Aorta (tissue), 5 donors: ENCODE measurements at regions of chr1 and their contacts with region 1.

Region 1: GRCh38 chr1:202501281-202501680 is 152.8 kb downstream of the PPP1R12B start:
- DNase-seq: no peak
- ATAC-seq: no peak
- H3K4me3 ChIP-seq: no peak overlapping the region
- H3K27ac ChIP-seq: no peak overlapping the region
- H3K4me1 ChIP-seq: peaks cover 1 to 3% of the 10 kb centered on the region in 2 donors
- H3K27me3 ChIP-seq: no peaks in the 10 kb centered on the region

Region 2: DNA sequence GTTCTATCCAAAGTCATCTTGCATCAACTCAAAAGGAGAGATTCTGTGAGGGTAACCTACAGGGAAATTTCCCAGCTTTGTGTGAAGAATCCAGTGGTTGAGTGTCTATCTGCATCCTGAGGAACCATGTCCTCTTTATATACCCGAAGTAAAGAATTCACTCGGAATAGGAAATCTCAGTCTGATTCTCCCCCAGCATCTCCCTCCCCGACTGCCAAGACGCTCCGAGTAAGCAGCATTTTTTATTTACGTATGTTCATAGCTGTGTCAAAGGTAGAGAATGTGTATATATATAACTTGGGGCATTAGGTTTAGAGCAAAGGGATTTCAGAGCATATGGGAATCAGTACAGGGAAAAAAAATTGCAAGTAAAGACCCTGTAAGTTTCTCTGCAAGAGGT is 38.7 kb after region 1 on chr1:
- intact Hi-C with region 1: loop called (anchors 5 kb)
- DNase-seq: no peak
- ATAC-seq: no peak
- H3K4me3 ChIP-seq: peak overlapping the region; percentile 94 to 100
- H3K27ac ChIP-seq: peak overlapping the region; percentile 96 to 97
- H3K4me1 ChIP-seq: no peaks in the 10 kb centered on the region
- H3K27me3 ChIP-seq: no peaks in the 10 kb centered on the region

Region 3: DNA sequence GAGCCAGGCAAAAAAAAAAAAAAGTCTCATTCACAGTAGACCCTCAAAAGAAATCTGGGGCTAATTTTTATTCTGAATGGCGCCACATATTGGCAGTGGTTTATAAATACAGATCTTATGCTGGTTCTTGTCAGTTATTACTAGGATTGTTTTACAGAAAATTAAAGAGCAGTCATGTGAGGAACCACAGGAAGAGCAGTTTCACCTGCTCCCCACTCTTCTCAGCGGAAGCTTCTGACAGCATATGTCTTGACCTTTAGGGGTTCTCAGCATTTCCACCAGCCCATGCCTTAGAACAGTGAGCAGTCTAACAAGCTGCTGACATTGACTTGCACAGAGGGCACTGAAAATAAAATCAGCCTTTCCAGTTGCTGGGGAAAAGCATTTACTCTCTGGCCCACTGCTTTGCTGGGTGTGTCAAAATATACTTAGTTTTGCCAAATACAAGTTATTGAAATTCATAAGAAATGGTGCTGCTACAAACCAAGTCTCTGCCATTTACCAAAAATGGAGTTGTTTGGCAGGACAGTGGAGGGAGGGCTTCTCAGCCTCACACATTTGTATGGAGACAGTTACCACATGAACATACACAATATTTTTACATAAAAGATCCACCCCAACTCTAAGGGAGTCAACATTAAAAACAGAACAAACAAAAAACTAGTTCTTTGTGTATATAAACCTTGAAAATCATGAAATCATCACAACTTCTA is 64.8 kb after region 1 on chr1:
- intact Hi-C with region 1: loop called in 1 of 2 experiments (anchors 5 kb)
- DNase-seq: no peak
- ATAC-seq: peak; percentile 34
- H3K4me3 ChIP-seq: no peak overlapping the region
- H3K27ac ChIP-seq: peak overlapping the region in 1 of 2 donors; percentile 88
- H3K4me1 ChIP-seq: peaks cover 13 to 31% of the 10 kb centered on the region in 2 donors
- H3K27me3 ChIP-seq: no peaks in the 10 kb centered on the region

Region 4: DNA sequence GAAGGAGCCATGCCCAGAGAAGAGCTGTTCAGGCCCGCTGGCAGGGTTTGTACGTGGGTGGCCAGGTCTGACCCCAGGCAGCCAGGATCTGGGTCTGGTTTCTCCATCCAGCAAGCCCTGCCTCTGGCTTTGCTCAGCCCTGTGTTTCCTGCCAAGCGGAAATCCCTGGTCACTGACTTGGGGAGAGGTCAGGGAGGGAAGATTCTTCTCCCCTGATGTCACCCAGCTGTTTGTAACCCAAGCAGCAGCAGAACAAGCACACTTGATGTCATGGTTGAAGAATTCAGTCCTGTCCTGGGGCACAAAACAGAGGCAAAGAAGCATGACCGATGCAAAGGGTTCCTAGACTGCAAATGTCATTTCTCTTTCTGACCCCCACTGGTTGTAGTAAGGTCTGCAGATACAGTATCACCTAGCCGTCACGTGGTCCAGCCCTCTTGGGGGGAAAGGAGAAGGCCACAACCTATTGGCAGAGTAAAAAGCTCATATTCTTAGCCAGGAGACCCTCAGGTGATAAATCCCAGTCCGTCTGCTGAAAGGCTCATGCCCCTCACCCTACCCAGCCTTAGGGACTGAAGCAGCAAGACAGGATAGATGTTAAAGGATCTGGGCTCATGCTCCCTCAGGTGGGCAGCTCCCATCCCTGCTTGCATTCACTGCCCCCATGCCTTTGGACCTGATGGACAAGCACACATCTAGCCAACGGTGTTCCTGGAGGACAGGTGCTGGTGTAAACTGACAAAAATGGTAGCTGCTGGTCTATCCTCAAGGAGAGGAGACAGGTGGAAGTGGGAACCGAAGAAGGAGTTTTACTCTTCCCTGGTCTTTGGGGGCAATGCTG is 88.1 kb after region 1 on chr1:
- intact Hi-C with region 1: loop called in 1 of 2 experiments (anchors 5 kb)
- DNase-seq: peak; percentile 94 to 95
- ATAC-seq: peak; percentile 89
- H3K4me3 ChIP-seq: no peak overlapping the region
- H3K27ac ChIP-seq: peak overlapping the region; percentile 72 to 91
- H3K4me1 ChIP-seq: peaks cover 7% of the 10 kb centered on the region in 2 donors
- H3K27me3 ChIP-seq: no peaks in the 10 kb centered on the region

Region 5: GRCh38 chr1:202599677-202600431 is 98.6 kb after region 1 on chr1:
- intact Hi-C with region 1: loop called (anchors 5 kb)
- DNase-seq: peak; percentile 80 to 84
- ATAC-seq: peak; percentile 67
- H3K4me3 ChIP-seq: no peak overlapping the region
- H3K27ac ChIP-seq: peak overlapping the region in 1 of 2 donors; percentile 47
- H3K4me1 ChIP-seq: no peaks in the 10 kb centered on the region
- H3K27me3 ChIP-seq: no peaks in the 10 kb centered on the region

Region 6: GRCh38 chr1:202642619-202643291 is 141.5 kb after region 1 on chr1:
- intact Hi-C with region 1: no loop called
- DNase-seq: no peak
- ATAC-seq: no peak
- H3K4me3 ChIP-seq: peak overlapping the region; percentile 8 to 23
- H3K27ac ChIP-seq: no peak overlapping the region
- H3K4me1 ChIP-seq: no peaks in the 10 kb centered on the region
- H3K27me3 ChIP-seq: no peaks in the 10 kb centered on the region